CD14-positive monocyte (primary cell): ENCODE measurements at regions of chr3 and their contacts with region 1.

Region 1: GRCh38 chr3:119891944-119892721 is 110.2 kb downstream of the NR1I2 start:
- DNase-seq: peak; percentile 29 to 52 (median 31)
- H3K4me3 ChIP-seq: no peak overlapping the region
- H3K4me3 Mint-ChIP-seq: no peak overlapping the region
- H3K27ac ChIP-seq: no peak overlapping the region
- H3K27ac Mint-ChIP-seq: no peak overlapping the region
- H3K4me1 ChIP-seq: no peaks in the 10 kb centered on the region
- H3K4me1 Mint-ChIP-seq: peaks cover 14% of the 10 kb centered on the region
- H3K27me3 ChIP-seq: no peaks in the 10 kb centered on the region
- H3K27me3 Mint-ChIP-seq: no peaks in the 10 kb centered on the region
- CTCF ChIP-seq: peak; percentile 84

Region 2: DNA sequence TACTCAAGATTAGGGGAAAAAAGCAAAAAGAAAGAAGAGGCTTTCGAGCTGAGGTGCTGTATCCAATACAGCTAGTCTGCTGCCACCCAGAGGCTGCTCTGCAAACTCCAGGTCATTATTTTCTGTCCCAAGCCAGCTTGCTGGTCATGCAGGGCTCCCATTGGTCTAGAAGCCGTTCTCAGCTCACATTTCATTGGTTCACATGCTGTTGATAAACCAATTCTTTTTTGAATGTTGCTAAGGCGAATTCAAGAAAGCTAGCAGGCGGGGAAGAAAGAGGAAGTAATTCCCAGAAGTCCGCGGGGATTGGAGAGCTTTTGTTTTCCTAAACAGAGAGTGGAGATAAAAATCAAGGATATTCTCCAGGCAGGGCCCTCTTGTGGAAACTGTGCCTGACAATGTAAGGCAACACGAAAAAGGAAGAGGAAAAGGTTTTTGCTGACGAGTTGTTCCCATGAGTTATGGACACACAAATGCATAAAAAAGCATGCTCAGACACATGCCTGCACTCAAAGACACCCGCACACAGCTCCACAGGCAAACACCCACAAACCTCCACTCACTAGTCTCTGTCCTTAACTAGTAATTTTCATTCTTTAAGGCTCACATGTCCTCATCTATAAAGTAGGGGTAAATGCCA is 525.3 kb after region 1 on chr3:
- intact Hi-C with region 1: loop called in 1 of 2 experiments (anchors 5 kb)
- DNase-seq: peak; percentile 86 to 97 (median 93)
- H3K4me3 ChIP-seq: peak overlapping the region; percentile 14 to 88 (median 70)
- H3K4me3 Mint-ChIP-seq: peak overlapping the region; percentile 77 to 89
- H3K27ac ChIP-seq: peak overlapping the region in 1 of 2 donors; percentile 12
- H3K27ac Mint-ChIP-seq: peak overlapping the region; percentile 53 to 88 (median 81)
- H3K4me1 ChIP-seq: peaks cover 23 to 31% of the 10 kb centered on the region in 2 donors
- H3K4me1 Mint-ChIP-seq: peaks cover 29% of the 10 kb centered on the region
- H3K27me3 ChIP-seq: no peaks in the 10 kb centered on the region
- H3K27me3 Mint-ChIP-seq: peaks cover 0 to 4% (median 2%) of the 10 kb centered on the region in 3 donors
- CTCF ChIP-seq: peak; percentile 86